ENCODE measurements at regions of chr3 and their contacts with region 1.

Region 1: DNA sequence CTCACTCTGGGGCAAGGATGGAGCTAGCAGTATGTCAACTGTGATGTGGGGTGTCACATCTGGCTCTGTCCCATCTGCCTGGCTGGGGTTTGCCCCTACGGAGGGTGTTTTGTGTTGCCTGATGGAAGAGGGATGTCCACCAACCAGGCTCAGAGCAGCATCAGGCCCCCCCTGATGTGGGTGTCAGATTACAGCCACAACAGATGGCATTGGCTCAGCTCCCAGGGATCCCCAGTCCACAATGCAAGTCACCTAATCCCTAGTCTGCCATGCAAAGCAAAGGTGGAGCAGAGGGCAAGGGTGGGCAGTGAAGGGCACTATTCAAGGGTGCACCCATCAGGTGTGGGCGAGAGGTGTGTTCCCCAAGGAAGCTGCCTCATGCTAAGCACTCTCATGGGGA is 48.9 kb upstream of the AMOTL2 start:
- DNase-seq: no peak
- H3K4me3 ChIP-seq: no peak overlapping the region
- H3K27ac ChIP-seq: no peak overlapping the region
- H3K4me1 ChIP-seq: no peaks in the 10 kb centered on the region
- H3K27me3 ChIP-seq: no peaks in the 10 kb centered on the region
- CTCF ChIP-seq: no peak

Region 2: GRCh38 chr3:132966374-132966773 is 1456.8 kb before region 1 on chr3:
- intact Hi-C with region 1: loop called (anchors 5 kb)
- DNase-seq: no peak
- H3K4me3 ChIP-seq: no peak overlapping the region
- H3K27ac ChIP-seq: no peak overlapping the region
- H3K4me1 ChIP-seq: no peaks in the 10 kb centered on the region
- H3K27me3 ChIP-seq: no peaks in the 10 kb centered on the region
- CTCF ChIP-seq: no peak

Region 3: DNA sequence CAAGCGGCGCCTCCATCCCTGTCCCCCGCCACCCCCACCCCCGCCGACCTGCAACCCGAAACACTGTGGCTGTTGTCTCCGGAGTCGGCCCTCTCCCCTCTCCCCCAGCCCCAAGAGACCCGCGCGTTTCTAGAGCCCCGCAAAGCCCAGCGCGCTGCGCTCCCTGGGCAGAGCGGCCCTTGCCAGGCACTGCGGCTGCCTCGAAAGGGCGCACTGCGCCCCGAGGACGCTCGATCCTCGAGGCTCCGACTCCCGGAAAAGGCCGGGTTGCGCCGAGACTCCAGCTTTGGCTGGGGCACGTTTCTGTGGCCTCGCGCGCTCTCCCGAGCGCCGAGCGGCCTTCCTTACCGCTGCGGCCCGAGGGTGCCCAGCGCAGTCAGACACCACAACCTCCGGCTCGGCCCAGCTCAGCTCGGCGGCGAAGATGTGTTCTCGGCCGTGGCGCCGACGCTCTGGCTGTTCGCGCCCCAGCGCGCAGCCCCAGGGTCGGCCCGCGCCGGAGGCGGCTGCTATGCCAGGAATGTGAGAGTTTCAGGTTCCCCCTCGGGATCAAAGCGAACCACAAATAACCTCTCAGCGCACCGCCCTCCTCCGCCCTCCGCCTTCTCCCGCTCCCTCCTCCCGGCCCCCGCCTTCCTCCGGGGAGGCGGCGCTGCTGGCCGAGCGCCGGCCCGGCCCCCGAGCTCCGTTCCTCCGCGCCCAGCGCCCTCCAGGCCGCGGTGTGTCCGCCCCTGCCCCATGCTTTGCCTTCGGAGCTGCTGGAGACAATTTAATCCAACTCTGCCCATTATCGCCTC is 49.0 kb before region 1 on chr3 and contains the start of gene AMOTL2:
- intact Hi-C with region 1: no loop called
- DNase-seq: peak; percentile 83 to 93
- H3K4me3 ChIP-seq: peak within 1 kb of the TSS; percentile 90 to 97
- H3K27ac ChIP-seq: peak within 1 kb of the TSS; percentile 98 to 99
- H3K4me1 ChIP-seq: peaks cover 18 to 48% (median 43%) of the 10 kb centered on the region in 4 donors
- H3K27me3 ChIP-seq: no peaks in the 10 kb centered on the region
- CTCF ChIP-seq: no peak